B cell (primary cell): ENCODE measurements at regions of chr7 and their contacts with region 1.

Region 1: DNA sequence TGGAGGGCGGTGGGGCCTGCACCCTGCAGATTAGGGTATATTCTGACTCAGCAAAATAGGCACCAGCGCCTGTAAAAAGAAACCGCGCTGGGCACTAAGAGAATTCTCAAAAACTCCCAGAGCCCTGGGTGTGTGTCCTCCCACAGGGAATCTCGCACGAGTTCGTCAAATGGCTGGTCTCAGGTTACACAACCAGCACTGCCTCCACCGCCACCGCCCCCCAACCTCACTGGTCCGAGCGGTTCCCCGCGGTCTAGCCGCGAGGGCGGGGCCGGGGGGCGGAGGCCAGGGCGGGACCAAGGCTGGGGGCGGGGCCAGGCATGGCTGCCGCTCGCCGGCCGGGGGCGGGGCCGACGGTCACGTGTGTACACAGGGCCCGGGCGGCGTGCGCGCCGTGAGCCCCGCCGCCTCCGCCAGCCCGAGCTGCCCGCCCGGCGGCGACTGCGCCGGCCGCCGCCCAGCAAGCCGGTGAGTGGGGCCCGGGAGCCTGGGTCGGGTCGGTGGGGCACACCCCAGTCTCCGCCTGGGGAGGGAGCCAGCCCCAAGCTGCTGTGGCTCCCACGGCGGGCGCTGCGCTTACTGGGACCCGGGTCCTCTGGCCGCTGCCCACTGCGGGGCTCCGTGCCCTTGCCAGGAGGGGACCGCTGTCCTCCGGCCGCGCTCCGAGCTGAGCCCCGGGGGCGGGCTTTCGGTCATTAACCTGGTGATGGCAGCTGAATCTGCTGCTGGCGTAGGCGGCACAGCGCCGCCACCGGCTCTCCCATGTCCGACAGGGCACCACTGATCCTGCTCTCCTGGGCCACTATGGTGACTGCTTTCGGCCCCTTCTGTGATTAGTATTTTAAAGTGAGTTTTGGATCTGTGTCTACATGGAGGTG is at the start of gene GPR146:
- DNase-seq: peak; percentile 91
- ATAC-seq: peak; percentile 95
- H3K4me3 ChIP-seq: peak within 1 kb of the TSS; percentile 11 to 75 (median 63)
- H3K4me3 Mint-ChIP-seq: peak within 1 kb of the TSS; percentile 96
- H3K27ac ChIP-seq: peak within 1 kb of the TSS in 1 of 2 donors; percentile 69
- H3K27ac Mint-ChIP-seq: peak within 1 kb of the TSS; percentile 75
- H3K4me1 ChIP-seq: peaks cover 17 to 20% of the 10 kb centered on the region in 2 donors
- H3K4me1 Mint-ChIP-seq: peaks cover 28% of the 10 kb centered on the region
- H3K27me3 ChIP-seq: peaks cover 0 to 5% (median 1%) of the 10 kb centered on the region in 4 experiments
- H3K27me3 Mint-ChIP-seq: peaks cover 3% of the 10 kb centered on the region
- CTCF ChIP-seq: peak; percentile 80
- total RNA-seq, gene GPR146: 44.6 and 45.4 TPM in 2 replicates

Region 2: GRCh38 chr7:1004018-1004852 is 40.2 kb before region 1 on chr7:
- CTCF ChIA-PET with region 1: interaction called, 3 read pairs
- POLR2A ChIA-PET with region 1: no interaction called
- intact Hi-C with region 1: loop called (anchors 1 kb)
- DNase-seq: peak; percentile 87
- ATAC-seq: peak; percentile 82
- H3K4me3 ChIP-seq: no peak overlapping the region
- H3K4me3 Mint-ChIP-seq: peak overlapping the region; percentile 76
- H3K27ac ChIP-seq: peak overlapping the region in 1 of 2 donors; percentile 34
- H3K27ac Mint-ChIP-seq: peak overlapping the region; percentile 91
- H3K4me1 ChIP-seq: peaks cover 10 to 26% of the 10 kb centered on the region in 2 donors
- H3K4me1 Mint-ChIP-seq: peaks cover 40% of the 10 kb centered on the region
- H3K27me3 ChIP-seq: no peaks in the 10 kb centered on the region
- H3K27me3 Mint-ChIP-seq: no peaks in the 10 kb centered on the region
- CTCF ChIP-seq: no peak

Region 3: DNA sequence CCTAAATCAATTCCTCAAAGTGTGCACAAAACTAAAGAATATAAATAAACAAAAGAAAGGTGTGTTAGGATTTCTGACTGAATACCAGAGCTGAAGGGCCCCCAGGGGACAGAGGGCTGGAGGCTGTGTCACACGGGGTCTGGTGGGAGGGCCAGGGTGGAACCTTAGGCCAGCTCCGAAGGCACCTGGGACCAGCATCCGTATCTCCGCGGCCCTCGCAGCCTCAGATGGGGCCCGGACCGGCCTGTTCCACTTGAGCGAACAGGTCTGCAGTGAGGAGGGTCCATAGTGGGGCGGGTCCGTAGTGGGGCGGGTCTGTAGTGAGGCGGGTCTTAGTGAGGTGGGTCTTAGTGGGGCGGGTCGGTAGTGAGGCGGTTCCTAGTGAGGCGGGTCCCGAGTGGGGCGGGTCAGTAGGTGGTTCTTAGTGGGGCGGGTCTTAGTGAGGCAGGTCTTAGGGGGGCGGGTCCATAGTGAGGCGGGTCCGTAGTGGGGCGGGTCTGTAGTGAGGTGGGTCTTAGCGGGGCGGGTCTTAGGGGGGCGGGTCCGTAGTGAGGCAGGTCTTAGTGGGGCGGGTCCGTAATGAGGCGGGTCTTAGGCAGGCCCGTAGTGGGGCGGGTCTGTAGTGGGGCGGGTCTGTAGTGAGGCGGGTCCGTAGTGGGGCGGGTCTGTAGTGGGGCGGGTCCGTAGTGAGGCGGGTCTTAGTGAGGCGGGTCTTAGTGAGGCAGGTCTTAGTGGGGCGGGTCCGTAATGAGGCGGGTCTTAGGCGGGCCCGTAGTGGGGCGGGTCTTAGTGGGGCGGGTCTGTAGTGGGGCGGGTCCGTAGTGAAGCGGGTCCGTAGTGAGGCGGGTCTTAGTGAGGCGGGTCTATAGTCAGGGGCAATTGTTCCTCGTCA is 15.0 kb after region 1 on chr7:
- CTCF ChIA-PET with region 1: interaction called, 24 read pairs
- POLR2A ChIA-PET with region 1: interaction called, 6 read pairs
- intact Hi-C with region 1: no loop called
- DNase-seq: no peak
- ATAC-seq: peak; percentile 11
- H3K4me3 ChIP-seq: no peak overlapping the region
- H3K4me3 Mint-ChIP-seq: peak overlapping the region; percentile 68
- H3K27ac ChIP-seq: no peak overlapping the region
- H3K27ac Mint-ChIP-seq: peak overlapping the region; percentile 61
- H3K4me1 ChIP-seq: peaks cover 52 to 55% of the 10 kb centered on the region in 2 donors
- H3K4me1 Mint-ChIP-seq: peaks cover 66% of the 10 kb centered on the region
- H3K27me3 ChIP-seq: peaks cover 0 to 53% (median 22%) of the 10 kb centered on the region in 4 experiments
- H3K27me3 Mint-ChIP-seq: peaks cover 32% of the 10 kb centered on the region
- CTCF ChIP-seq: no peak